ENCODE measurements at regions of chr2 and their contacts with region 1.

Region 1: GRCh38 chr2:97995734-97996624 is at the start of gene TMEM131:
- DNase-seq: peak; percentile 97
- ATAC-seq: peak; percentile 84
- H3K4me3 Mint-ChIP-seq: peak within 1 kb of the TSS; percentile 85
- H3K27ac Mint-ChIP-seq: peak within 1 kb of the TSS; percentile 97
- H3K4me1 Mint-ChIP-seq: peaks cover 35% of the 10 kb centered on the region
- H3K27me3 Mint-ChIP-seq: no peaks in the 10 kb centered on the region
- total RNA-seq, gene TMEM131: 25.8 to 32.5 TPM

Region 2: DNA sequence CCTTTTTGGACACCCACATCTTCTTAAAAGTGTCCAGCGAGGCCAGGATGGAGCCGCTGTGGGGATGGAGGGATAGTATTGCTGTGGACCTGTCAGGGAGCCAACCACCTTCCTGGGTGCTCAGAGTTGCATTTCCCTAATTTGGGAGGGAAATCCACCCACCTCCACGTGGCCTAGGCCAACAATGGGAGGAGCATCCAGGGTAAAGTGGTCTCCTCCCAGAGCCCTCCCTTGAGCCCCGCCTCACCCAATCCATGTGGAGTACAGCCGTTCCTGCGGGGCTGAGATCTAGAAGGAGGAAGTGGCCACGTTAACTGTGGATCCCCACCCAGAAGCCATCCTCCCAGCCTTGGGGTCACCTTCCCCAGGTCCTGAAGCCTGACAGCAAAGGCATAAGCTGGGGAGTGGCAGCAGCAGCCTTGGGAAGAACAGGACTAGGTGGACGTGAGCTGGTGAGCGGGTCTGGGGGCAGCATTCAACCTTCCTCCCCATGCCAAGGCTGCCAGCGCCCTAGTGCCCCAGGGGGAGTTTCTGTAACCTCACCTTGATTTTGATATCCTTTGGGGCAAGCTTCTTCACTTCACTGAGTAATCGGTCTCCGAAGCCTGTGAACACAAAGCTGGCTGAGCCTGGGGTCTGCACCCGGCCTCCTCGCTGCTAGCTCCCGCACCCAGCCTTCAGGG is 338.9 kb before region 1 on chr2:
- CTCF ChIA-PET with region 1: no interaction called
- POLR2A ChIA-PET with region 1: no interaction called
- intact Hi-C with region 1: no loop called
- DNase-seq: no peak
- ATAC-seq: no peak
- H3K4me3 Mint-ChIP-seq: no peak overlapping the region
- H3K27ac Mint-ChIP-seq: no peak overlapping the region
- H3K4me1 Mint-ChIP-seq: peaks cover 29% of the 10 kb centered on the region
- H3K27me3 Mint-ChIP-seq: no peaks in the 10 kb centered on the region

Region 3: GRCh38 chr2:97718051-97718882 is 277.7 kb before region 1 on chr2:
- CTCF ChIA-PET with region 1: no interaction called
- POLR2A ChIA-PET with region 1: no interaction called
- intact Hi-C with region 1: loop called in 1 of 2 experiments (anchors 5 kb)
- DNase-seq: peak; percentile 86
- ATAC-seq: peak; percentile 77
- H3K4me3 Mint-ChIP-seq: peak overlapping the region; percentile 71
- H3K27ac Mint-ChIP-seq: peak overlapping the region; percentile 95
- H3K4me1 Mint-ChIP-seq: peaks cover 68% of the 10 kb centered on the region
- H3K27me3 Mint-ChIP-seq: no peaks in the 10 kb centered on the region

Region 4: GRCh38 chr2:97849881-97850528 is 146.0 kb before region 1 on chr2:
- CTCF ChIA-PET with region 1: no interaction called
- POLR2A ChIA-PET with region 1: no interaction called
- intact Hi-C with region 1: loop called in 1 of 2 experiments (anchors 10 kb)
- DNase-seq: no peak
- ATAC-seq: peak; percentile 86
- H3K4me3 Mint-ChIP-seq: no peak overlapping the region
- H3K27ac Mint-ChIP-seq: peak overlapping the region; percentile 34
- H3K4me1 Mint-ChIP-seq: peaks cover 41% of the 10 kb centered on the region
- H3K27me3 Mint-ChIP-seq: no peaks in the 10 kb centered on the region

Region 5: DNA sequence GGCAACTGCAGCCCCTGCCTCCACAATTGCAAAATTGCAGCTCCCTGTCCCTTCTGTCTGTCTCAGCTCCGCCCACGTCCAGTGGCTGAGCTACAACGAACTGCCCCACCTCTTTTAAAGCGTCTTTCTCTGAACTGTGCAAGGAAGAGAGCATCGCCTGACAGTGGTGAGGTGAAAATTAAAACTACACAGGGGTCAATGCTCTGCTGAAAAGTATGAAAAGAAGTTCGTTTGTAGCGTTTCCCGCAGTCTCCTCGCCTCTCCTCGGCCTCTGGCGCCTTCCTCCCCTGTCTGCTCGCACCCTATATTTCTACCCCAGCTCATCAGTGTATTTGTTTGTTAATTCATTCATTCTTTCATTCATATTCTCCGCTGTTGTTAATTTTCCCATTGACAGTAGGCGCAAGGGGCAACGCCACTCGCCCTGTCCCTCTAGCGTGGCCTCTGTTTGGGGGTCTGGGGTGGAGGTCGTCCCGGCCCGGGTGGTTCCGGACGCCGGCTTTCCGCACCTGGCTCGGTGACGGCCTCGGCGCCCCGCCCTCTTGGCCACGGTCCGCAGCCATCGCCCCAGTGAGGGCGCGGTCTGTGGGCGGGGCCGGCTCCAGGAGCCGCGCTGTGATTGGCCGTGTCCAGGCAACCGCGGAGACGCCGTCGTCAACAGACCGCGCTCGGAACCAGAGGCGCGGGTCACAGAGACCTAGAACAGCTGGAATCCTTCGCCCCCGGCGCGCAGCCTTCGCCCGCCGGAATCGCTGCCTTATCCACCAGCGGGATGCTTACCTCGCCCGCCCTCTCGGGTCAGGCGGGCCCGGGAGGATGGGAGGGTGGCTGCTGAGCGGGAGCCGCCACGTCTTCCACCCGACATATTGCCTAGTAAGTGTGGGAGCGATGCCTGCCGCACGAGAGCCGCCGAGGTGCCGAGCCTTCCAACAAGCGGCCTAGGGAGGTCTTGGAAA is 90.8 kb after region 1 on chr2 and contains the start of gene VWA3B:
- CTCF ChIA-PET with region 1: no interaction called
- POLR2A ChIA-PET with region 1: no interaction called
- intact Hi-C with region 1: loop called in 1 of 2 experiments (anchors 2 kb)
- DNase-seq: peak; percentile 76
- ATAC-seq: peak; percentile 89
- H3K4me3 Mint-ChIP-seq: peak within 1 kb of the TSS; percentile 47
- H3K27ac Mint-ChIP-seq: peak within 1 kb of the TSS; percentile 53
- H3K4me1 Mint-ChIP-seq: peaks cover 17% of the 10 kb centered on the region
- H3K27me3 Mint-ChIP-seq: peaks cover 44% of the 10 kb centered on the region
- total RNA-seq, gene VWA3B: not detected

Region 6: GRCh38 chr2:99154643-99155536 is 1158.9 kb after region 1 on chr2 and contains the starts of genes LIPT1 and TSGA10:
- CTCF ChIA-PET with region 1: no interaction called
- POLR2A ChIA-PET with region 1: no interaction called
- intact Hi-C with region 1: loop called in 1 of 2 experiments (anchors 10 kb)
- DNase-seq: peak; percentile 96
- ATAC-seq: peak; percentile 94
- H3K4me3 Mint-ChIP-seq: no peak within 1 kb of the TSS
- H3K27ac Mint-ChIP-seq: peak within 1 kb of the TSS; percentile 93
- H3K4me1 Mint-ChIP-seq: peaks cover 36% of the 10 kb centered on the region
- H3K27me3 Mint-ChIP-seq: no peaks in the 10 kb centered on the region
- total RNA-seq, gene LIPT1: 4.6 to 4.7 TPM
- total RNA-seq, gene TSGA10: 6.4 to 9.4 TPM

Measured in activated CD4-positive, alpha-beta T cell treated with anti-CD3 and anti-CD28 coated beads for 36 hours (primary cell).